ENCODE measurements at regions of chr2 and their contacts with region 1.

Region 1: DNA sequence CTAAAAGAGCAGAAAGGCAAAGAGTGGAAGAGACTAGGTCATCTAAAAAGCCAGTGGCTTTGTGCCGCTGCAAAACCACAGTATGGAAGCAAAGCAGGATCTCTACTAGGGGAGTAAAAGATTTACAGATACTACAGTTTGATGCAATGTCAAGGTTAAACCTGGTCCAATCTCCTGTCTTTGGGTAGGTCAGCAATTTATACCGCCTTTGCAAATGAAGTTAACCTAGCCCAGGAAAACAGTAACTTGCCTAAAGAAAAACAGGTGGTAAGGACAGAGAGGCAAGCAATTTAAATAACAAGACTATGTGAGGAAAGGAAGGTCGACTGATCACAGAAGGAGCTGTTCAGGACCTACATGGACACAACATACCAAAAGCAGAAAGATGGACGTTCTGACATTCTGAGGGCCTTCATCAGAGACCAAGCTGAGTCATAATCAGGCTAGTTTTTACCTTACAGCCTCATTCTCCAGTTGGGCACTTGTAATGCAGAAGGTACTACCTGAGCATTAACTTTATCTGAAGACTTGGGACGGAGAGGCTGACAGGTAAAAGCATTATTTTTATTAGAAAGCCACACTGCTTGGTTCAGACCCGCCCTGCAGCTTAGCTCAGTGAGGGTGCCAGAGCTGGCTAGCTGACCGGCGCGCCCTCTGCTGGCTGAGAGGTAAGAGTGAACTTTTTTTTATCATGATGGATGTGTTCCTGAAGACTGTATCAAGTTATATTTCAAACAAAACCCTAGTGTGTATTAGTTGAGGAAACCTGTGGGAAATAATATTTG is 15.9 kb downstream of the CDKL4 start:
- DNase-seq: peak; percentile 73
- H3K4me3 ChIP-seq: no peak overlapping the region
- H3K27ac ChIP-seq: no peak overlapping the region
- H3K4me1 ChIP-seq: no peaks in the 10 kb centered on the region
- H3K27me3 ChIP-seq: no peaks in the 10 kb centered on the region
- CTCF ChIP-seq: peak; percentile 87

Region 2: GRCh38 chr2:38947240-38948239 is 280.3 kb before region 1 on chr2:
- intact Hi-C with region 1: loop called (anchors 2 kb)
- DNase-seq: peak; percentile 78
- H3K4me3 ChIP-seq: no peak overlapping the region
- H3K27ac ChIP-seq: no peak overlapping the region
- H3K4me1 ChIP-seq: no peaks in the 10 kb centered on the region
- H3K27me3 ChIP-seq: no peaks in the 10 kb centered on the region
- CTCF ChIP-seq: peak; percentile 45

Region 3: GRCh38 chr2:39059366-39059952 is 168.4 kb before region 1 on chr2:
- intact Hi-C with region 1: loop called (anchors 2 kb)
- DNase-seq: no peak
- H3K4me3 ChIP-seq: no peak overlapping the region
- H3K27ac ChIP-seq: no peak overlapping the region
- H3K4me1 ChIP-seq: no peaks in the 10 kb centered on the region
- H3K27me3 ChIP-seq: no peaks in the 10 kb centered on the region
- CTCF ChIP-seq: peak; percentile 71

Region 4: DNA sequence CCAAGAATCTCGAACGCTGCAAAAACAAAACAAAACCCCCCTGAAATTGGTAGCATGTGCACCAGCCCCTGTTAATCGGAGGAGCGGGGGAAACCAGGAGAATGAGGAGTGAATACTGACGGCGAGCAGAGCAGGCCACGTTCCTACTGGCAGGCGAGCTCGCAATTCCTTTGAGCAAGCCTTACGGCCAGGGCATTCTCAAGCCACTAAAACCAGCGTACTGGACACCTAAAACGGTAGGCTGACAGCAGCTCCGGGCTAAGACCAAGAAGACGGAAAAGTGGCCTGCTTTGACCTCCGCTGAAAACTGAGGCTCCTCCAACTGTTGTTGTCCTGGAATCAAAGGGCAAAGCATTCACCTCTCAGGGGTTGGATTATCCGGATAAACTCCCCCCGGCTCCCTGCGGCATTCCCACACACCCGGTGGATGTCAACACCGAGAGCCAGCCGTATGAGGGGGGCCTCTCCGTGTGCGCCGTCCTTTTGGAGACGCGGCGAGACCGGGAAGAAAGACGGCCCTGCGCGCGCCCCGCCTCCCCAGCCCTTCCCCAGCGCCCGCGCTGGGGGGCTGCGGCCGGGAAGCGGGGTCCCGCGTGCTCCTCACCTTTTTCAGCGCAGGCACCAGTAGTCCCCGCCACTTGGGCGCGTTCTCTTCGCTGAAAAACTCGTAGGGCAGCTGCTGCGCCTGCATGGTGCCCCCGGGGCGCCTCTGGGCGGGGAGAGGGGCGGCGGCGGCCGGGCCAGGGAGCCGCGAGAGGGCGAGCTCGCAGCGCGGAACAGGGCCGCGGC is 107.9 kb before region 1 on chr2:
- intact Hi-C with region 1: loop called (anchors 5 kb)
- DNase-seq: peak; percentile 62
- H3K4me3 ChIP-seq: peak overlapping the region; percentile 79
- H3K27ac ChIP-seq: peak overlapping the region; percentile 99
- H3K4me1 ChIP-seq: peaks cover 8% of the 10 kb centered on the region
- H3K27me3 ChIP-seq: no peaks in the 10 kb centered on the region
- CTCF ChIP-seq: no peak

Measured in colonic mucosa (tissue), 4 donors.